ENCODE measurements at regions of chr10 and their contacts with region 1.

Region 1: GRCh38 chr10:92523639-92524038 is 50.3 kb downstream of the IDE start:
- DNase-seq: no peak
- ATAC-seq: no peak
- H3K4me3 ChIP-seq: no peak overlapping the region
- H3K4me3 Mint-ChIP-seq: no peak overlapping the region
- H3K27ac ChIP-seq: no peak overlapping the region
- H3K27ac Mint-ChIP-seq: no peak overlapping the region
- H3K4me1 ChIP-seq: no peaks in the 10 kb centered on the region
- H3K4me1 Mint-ChIP-seq: no peaks in the 10 kb centered on the region
- H3K27me3 ChIP-seq: no peaks in the 10 kb centered on the region
- H3K27me3 Mint-ChIP-seq: no peaks in the 10 kb centered on the region
- CTCF ChIP-seq: no peak

Region 2: DNA sequence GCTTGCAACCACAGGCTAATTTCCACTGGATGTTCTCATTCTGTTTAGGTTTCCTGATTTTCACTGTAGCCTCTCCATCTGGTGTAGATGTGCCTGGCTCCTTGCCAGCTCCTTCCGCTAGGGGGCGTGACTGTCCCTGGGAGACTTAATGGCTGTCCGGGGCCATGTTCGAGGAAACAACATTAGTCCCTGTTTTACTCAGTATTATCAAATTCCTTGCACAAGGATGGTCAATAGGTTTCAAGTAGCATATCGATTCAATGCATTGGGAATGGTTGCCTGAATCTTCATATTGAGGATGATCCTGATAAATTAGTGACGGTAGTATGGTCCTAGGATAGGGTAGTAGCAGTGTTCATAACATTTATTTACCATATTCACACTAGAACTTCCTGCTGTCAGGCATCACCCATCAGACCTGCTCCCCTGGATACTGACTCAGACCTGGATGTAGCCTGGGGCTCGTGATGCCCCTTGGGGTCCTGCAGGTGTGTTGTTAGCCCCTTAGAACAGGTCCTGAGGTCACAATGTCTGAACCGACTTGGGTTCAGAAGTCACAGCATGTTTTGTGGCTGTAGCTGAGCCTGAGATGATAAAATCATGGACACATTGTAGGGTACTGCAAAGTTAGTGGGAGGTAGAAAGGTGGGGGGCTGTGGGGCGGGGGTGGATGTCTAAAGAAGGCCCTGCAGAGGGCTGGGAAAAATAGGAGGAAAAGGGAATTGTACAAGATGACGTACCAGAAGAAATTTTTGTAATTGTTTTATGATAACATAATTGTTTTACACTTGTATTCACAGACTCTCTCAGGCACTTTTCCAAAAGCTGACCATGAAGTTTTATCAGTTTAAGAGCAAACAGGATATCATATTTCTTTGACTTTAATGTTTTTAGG is 315.8 kb after region 1 on chr10:
- CTCF ChIA-PET with region 1: interaction called, 3 read pairs
- POLR2A ChIA-PET with region 1: no interaction called
- intact Hi-C with region 1: loop called in 1 of 2 experiments (anchors 5 kb)
- DNase-seq: peak in 13 of 14 experiments; percentile 6 to 60 (median 28)
- ATAC-seq: no peak
- H3K4me3 ChIP-seq: no peak overlapping the region
- H3K4me3 Mint-ChIP-seq: no peak overlapping the region
- H3K27ac ChIP-seq: no peak overlapping the region
- H3K27ac Mint-ChIP-seq: no peak overlapping the region
- H3K4me1 ChIP-seq: no peaks in the 10 kb centered on the region
- H3K4me1 Mint-ChIP-seq: no peaks in the 10 kb centered on the region
- H3K27me3 ChIP-seq: no peaks in the 10 kb centered on the region
- H3K27me3 Mint-ChIP-seq: no peaks in the 10 kb centered on the region
- CTCF ChIP-seq: peak; percentile 24

Measured in CD4-positive, alpha-beta T cell (primary cell).